ENCODE measurements at regions of chr17 and their contacts with region 1.

Region 1: DNA sequence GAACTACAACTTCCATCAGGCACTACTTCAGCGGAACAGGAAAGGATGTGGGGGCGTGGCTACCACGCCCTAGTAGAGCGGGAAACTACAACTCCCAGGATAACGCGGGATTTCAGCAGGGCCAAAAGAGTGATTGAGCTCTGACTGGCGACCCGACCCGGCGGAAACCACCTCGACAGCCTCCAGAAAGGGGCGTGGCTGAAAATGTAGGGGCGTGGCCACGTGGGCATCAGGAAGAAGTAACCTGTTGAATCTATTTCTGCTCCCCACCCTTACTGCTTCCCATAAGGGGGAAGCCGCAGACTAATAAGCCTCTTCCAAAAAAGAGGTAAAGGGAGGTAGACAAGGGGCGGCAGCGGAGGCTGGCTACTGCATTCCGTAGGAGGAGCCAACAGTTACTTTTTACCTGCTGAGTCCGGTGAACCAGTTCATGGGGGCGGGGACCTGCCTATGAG is at the start of gene TMEM102:
- DNase-seq: peak; percentile 99
- ATAC-seq: peak; percentile 81
- H3K4me3 Mint-ChIP-seq: peak within 1 kb of the TSS; percentile 86
- H3K27ac Mint-ChIP-seq: peak within 1 kb of the TSS; percentile 97
- H3K4me1 Mint-ChIP-seq: peaks cover 42% of the 10 kb centered on the region
- H3K27me3 Mint-ChIP-seq: peaks cover 12% of the 10 kb centered on the region
- total RNA-seq, gene TMEM102: 13.9 to 16.7 TPM

Region 2: GRCh38 chr17:7351665-7352501 is 83.4 kb before region 1 on chr17 and contains the start of gene KCTD11:
- CTCF ChIA-PET with region 1: interaction called, 88 read pairs
- DNase-seq: peak; percentile 91
- ATAC-seq: peak; percentile 69
- H3K4me3 Mint-ChIP-seq: peak within 1 kb of the TSS; percentile 78
- H3K27ac Mint-ChIP-seq: peak within 1 kb of the TSS; percentile 86
- H3K4me1 Mint-ChIP-seq: peaks cover 56% of the 10 kb centered on the region
- H3K27me3 Mint-ChIP-seq: no peaks in the 10 kb centered on the region
- total RNA-seq, gene KCTD11: 6.0 to 6.1 TPM

Region 3: DNA sequence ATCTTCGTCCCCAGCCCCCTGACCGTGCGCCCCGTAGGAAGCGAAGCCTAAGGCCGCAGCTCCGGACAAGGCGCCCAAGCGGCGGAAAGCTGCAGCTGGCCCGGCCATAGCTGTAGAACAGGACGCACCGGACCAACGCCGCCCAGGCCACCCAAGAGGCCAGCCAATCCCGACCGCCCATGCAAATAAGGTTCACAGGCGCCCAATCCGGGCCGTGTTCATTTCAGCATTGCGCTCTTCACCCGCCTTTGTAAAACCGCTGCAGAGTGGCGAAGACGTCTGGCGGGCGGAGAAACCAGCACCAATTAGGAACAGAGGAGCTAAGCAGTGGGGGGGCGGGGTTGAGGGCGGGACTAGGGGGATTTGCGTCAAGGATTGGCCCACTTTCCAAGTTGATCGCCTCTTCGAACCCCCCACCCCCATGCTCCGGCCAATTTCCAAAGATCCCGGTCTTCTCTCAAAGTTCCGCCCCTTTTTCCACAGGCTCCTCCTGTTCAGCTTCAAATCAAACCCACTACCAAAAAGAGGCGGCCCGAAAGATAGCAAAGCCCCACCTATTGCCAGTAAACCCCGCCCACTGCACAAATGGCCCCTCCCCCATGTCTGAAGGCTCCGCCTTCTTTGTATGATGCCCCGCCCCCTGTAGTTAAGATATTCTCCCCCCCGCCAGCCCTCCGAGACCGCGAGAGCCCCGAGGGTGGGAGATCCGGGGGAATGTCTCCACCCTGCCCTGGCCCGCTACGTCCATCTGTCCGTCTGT is 31.1 kb before region 1 on chr17 and contains the start of gene TMEM256:
- CTCF ChIA-PET with region 1: interaction called, 34 read pairs
- DNase-seq: peak; percentile 99
- ATAC-seq: peak; percentile 94
- H3K4me3 Mint-ChIP-seq: peak within 1 kb of the TSS; percentile 88
- H3K27ac Mint-ChIP-seq: peak within 1 kb of the TSS; percentile 95
- H3K4me1 Mint-ChIP-seq: peaks cover 15% of the 10 kb centered on the region
- H3K27me3 Mint-ChIP-seq: peaks cover 9% of the 10 kb centered on the region
- total RNA-seq, gene TMEM256: 47.5 to 56.1 TPM

Region 4: DNA sequence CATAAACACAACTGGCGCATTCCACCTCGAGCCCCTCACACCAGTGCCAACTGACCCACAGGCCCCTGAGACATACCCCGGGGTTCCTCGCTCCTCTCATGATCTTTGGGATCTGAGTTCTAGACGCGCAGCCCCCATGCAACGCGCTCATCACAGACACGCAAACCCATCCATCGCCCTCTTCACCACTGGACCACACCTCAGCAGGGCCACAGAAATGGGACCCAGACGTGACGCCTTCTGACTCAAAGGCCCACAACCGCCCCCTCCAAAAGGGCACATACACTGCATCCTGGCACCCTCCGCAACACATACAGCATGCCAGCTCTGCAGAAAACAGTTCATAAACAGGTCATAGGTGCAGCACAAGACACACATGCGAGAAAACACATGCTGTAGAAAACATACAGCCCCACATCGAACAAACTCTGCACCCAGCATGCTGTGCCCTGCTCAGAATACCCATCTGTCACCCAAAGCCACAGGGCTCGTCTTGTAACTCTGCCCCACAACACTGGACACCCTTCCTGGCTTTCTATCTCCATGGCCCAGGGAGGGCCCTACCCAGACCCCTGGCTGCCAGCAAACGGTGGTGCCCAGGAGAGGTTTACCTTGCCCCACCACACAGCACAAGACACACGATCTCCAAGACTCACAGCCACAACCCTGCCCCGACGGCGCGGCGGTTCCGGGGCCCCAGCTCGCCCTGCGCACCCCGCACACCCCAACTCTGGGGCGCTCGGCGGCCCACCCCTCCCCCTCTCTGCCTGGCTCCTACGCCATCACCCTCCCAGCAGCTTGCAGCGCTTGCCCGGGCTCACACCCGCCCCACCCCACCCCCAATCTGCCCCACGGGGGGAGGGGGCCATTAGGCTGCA is 43.3 kb after region 1 on chr17:
- CTCF ChIA-PET with region 1: interaction called, 21 read pairs
- DNase-seq: peak; percentile 77
- ATAC-seq: peak; percentile 35
- H3K4me3 Mint-ChIP-seq: peak overlapping the region; percentile 82
- H3K27ac Mint-ChIP-seq: peak overlapping the region; percentile 84
- H3K4me1 Mint-ChIP-seq: peaks cover 61% of the 10 kb centered on the region
- H3K27me3 Mint-ChIP-seq: no peaks in the 10 kb centered on the region

Region 5: DNA sequence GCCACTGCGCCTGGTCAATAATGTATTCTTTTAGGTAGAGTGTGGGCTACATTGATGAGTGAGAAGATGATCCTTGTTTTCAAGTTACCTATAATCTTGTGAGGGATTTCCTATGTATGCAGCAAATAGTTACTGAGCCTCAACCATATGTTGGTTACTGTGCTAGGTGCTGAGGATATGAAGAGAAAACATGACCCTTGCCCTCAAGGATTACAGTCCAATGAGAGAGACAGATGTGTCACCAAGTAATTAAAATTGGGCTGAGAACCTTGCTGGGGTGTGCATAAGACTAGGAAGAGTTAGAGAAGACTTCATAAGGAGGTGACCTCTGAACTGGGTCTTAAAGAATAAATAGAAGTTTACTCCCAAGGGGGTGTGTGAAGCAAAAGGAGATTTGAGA is 56.3 kb after region 1 on chr17:
- CTCF ChIA-PET with region 1: interaction called, 41 read pairs
- DNase-seq: no peak
- ATAC-seq: no peak
- H3K4me3 Mint-ChIP-seq: no peak overlapping the region
- H3K27ac Mint-ChIP-seq: peak overlapping the region; percentile 26
- H3K4me1 Mint-ChIP-seq: peaks cover 58% of the 10 kb centered on the region
- H3K27me3 Mint-ChIP-seq: no peaks in the 10 kb centered on the region

Region 6: DNA sequence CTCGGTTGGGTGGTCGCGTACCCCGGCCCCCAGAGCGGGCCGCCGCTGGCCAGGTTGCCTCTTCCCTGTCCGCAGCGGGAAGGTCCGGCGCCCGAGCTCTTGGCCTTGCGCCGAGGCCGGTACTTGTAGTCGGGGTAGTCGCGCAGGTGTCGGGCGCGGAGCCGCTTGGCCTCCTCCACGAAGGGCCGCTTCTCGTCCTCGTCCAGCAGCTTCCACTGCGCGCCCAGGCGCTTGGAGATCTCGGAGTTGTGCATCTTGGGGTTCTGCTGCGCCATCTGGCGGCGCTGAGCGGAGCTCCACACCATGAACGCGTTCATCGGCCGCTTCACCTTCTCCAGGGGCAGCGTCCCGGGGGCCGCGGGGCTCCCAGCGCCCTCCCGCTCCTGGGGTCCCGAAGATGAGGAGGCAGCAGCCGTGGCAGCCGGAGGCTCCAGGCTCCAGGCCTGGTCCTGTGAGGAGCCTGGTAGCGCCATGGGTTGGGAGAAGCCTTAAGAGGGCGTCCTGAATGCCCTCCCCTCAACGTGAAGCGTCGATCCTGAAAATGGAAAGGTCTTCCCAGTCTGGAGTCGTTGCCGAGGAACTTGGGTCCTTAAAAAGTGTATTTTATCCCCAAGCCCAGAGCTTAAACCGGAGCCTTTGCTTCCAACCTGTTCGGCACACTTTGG is 154.1 kb after region 1 on chr17:
- CTCF ChIA-PET with region 1: interaction called, 10 read pairs
- DNase-seq: peak; percentile 73
- ATAC-seq: peak; percentile 77
- H3K4me3 Mint-ChIP-seq: no peak overlapping the region
- H3K27ac Mint-ChIP-seq: no peak overlapping the region
- H3K4me1 Mint-ChIP-seq: peaks cover 17% of the 10 kb centered on the region
- H3K27me3 Mint-ChIP-seq: no peaks in the 10 kb centered on the region

Region 7: DNA sequence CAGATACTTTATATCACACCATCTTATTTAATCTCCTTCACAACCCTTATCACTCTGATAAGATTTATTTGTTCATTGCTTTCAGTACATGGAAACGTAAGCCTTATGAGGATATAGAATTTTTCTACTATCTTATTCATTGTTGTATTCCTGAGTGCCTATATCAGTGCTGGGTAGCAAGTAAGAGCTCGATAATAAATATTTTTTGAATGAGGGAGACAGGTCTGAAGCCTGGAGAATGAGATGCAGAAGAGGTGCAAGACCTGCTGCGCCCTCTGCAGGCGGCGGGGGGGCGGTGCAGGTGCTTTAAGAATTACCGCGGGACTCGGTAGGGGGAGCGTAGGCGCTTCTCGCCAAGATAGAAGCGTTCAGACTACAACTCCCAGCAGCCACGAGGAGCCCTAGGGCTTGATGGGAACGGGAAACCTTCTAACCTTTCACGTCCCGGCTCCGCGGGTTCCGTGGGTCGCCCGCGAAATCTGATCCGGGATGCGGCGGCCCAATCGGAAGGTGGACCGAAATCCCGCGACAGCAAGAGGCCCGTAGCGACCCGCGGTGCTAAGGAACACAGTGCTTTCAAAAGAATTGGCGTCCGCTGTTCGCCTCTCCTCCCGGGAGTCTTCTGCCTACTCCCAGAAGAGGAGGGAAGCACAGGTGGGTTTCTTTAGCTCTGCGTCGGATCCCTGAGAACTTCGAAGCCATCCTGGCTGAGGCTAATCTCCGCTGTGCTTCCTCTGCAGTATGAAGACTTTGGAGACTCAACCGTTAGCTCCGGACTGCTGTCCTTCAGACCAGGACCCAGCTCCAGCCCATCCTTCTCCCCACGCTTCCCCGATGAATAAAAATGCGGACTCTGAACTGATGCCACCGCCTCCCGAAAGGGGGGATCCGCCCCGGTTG is 252.9 kb after region 1 on chr17 and contains the start of gene WRAP53:
- CTCF ChIA-PET with region 1: interaction called, 31 read pairs
- DNase-seq: peak; percentile 98
- ATAC-seq: peak; percentile 82
- H3K4me3 Mint-ChIP-seq: peak within 1 kb of the TSS; percentile 96
- H3K27ac Mint-ChIP-seq: peak within 1 kb of the TSS; percentile 97
- H3K4me1 Mint-ChIP-seq: peaks cover 33% of the 10 kb centered on the region
- H3K27me3 Mint-ChIP-seq: no peaks in the 10 kb centered on the region
- total RNA-seq, gene WRAP53: 28.0 to 29.0 TPM